A673 (cell line): ENCODE measurements at regions of chr3 and their contacts with region 1.

Region 1: GRCh38 chr3:46976326-46977190 is at the start of gene CCDC12:
- DNase-seq: peak; percentile 95
- H3K4me3 ChIP-seq: peak within 1 kb of the TSS; percentile 79
- H3K27ac ChIP-seq: peak within 1 kb of the TSS; percentile 89
- H3K4me1 ChIP-seq: no peaks in the 10 kb centered on the region
- H3K27me3 ChIP-seq: no peaks in the 10 kb centered on the region
- CTCF ChIP-seq: no peak
- total RNA-seq, gene CCDC12: 28.2 and 31.3 TPM in 2 replicates

Region 2: GRCh38 chr3:46960081-46960701 is 16.4 kb before region 1 on chr3:
- CTCF ChIA-PET with region 1: no interaction called
- POLR2A ChIA-PET with region 1: no interaction called
- intact Hi-C with region 1: no loop called
- DNase-seq: no peak
- H3K4me3 ChIP-seq: no peak overlapping the region
- H3K27ac ChIP-seq: no peak overlapping the region
- H3K4me1 ChIP-seq: no peaks in the 10 kb centered on the region
- H3K27me3 ChIP-seq: no peaks in the 10 kb centered on the region
- CTCF ChIP-seq: no peak

Region 3: GRCh38 chr3:47016086-47016933 is 39.8 kb after region 1 on chr3:
- CTCF ChIA-PET with region 1: no interaction called
- POLR2A ChIA-PET with region 1: interaction called, 11 read pairs
- intact Hi-C with region 1: no loop called
- DNase-seq: no peak
- H3K4me3 ChIP-seq: no peak overlapping the region
- H3K27ac ChIP-seq: no peak overlapping the region
- H3K4me1 ChIP-seq: peaks cover 15% of the 10 kb centered on the region
- H3K27me3 ChIP-seq: no peaks in the 10 kb centered on the region
- CTCF ChIP-seq: no peak

Region 4: DNA sequence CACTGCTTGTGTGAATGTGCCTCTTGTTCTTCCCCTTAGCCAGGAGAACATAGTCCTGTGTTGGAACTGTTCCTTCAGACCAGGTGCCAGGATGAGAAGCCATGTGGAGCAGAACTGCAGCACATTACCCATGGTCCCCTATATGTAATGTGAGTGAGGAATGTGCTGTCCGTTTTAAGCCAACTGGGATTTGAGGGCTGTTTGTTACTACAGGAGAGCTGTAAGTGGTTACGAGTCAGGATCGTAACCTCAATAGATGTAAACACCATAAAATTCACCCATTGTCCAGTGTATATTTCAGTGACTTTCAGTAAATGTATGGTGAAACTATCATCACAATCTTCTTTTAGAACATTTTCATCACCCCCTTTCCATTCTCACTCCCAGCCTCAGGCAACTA is 509.3 kb after region 1 on chr3:
- CTCF ChIA-PET with region 1: no interaction called
- POLR2A ChIA-PET with region 1: no interaction called
- intact Hi-C with region 1: no loop called
- DNase-seq: no peak
- H3K4me3 ChIP-seq: no peak overlapping the region
- H3K27ac ChIP-seq: no peak overlapping the region
- H3K4me1 ChIP-seq: no peaks in the 10 kb centered on the region
- H3K27me3 ChIP-seq: no peaks in the 10 kb centered on the region
- CTCF ChIP-seq: no peak

Region 5: DNA sequence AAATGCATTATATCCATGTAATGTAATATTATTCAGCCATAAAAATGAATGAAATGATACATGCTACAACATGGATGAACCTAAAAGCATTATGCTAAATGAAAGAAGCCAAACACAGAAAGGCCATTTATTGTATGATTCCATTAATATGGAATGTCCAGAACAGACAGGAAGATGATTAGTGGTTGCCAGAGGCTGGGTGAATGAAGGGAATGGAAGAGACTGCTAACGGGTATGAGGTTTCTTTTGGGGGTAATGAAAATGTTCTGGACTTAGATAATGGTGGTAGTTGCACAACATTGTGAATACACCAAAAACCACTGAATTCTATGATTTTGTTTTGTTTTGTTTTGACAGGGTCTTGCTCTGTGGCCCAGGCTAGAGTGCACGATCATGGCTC is 1101.3 kb after region 1 on chr3:
- CTCF ChIA-PET with region 1: no interaction called
- POLR2A ChIA-PET with region 1: no interaction called
- intact Hi-C with region 1: no loop called
- DNase-seq: no peak
- H3K4me3 ChIP-seq: no peak overlapping the region
- H3K27ac ChIP-seq: no peak overlapping the region
- H3K4me1 ChIP-seq: no peaks in the 10 kb centered on the region
- H3K27me3 ChIP-seq: no peaks in the 10 kb centered on the region
- CTCF ChIP-seq: no peak